Aorta (tissue), 5 donors: ENCODE measurements at regions of chr7 and their contacts with region 1.

Region 1: GRCh38 chr7:39228946-39229345 is 251.2 kb downstream of the POU6F2 start:
- DNase-seq: no peak
- ATAC-seq: no peak
- H3K4me3 ChIP-seq: no peak overlapping the region
- H3K27ac ChIP-seq: no peak overlapping the region
- H3K4me1 ChIP-seq: no peaks in the 10 kb centered on the region
- H3K27me3 ChIP-seq: no peaks in the 10 kb centered on the region

Region 2: GRCh38 chr7:39259391-39260003 is 30.6 kb after region 1 on chr7:
- intact Hi-C with region 1: loop called in 1 of 2 experiments (anchors 1 kb)
- DNase-seq: no peak
- ATAC-seq: peak; percentile 52
- H3K4me3 ChIP-seq: no peak overlapping the region
- H3K27ac ChIP-seq: no peak overlapping the region
- H3K4me1 ChIP-seq: no peaks in the 10 kb centered on the region
- H3K27me3 ChIP-seq: no peaks in the 10 kb centered on the region

Region 3: GRCh38 chr7:39501358-39501757 is 272.4 kb after region 1 on chr7:
- intact Hi-C with region 1: no loop called
- DNase-seq: no peak
- ATAC-seq: no peak
- H3K4me3 ChIP-seq: no peak overlapping the region
- H3K27ac ChIP-seq: no peak overlapping the region
- H3K4me1 ChIP-seq: no peaks in the 10 kb centered on the region
- H3K27me3 ChIP-seq: no peaks in the 10 kb centered on the region